HEK293 (cell line): ENCODE measurements at regions of chr5 and their contacts with region 1.

Region 1: DNA sequence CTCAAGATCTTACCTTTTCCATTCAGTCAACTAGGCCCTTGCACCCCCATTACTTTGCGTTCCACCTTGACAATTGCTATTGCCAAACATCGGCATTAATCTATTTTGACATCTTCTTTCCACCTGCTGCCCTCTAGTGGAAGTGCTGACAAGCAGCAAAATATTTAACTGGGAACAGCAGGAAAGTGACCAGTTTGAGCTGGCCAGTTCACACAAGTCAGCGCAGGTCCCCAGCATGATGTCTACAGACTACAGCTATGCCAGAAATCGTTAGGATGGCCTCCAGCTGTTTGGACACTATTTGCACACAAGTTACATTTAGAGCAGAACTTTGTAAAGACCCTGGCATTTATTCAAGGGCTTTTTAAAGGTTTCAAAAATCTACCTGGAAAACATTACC is 160.1 kb downstream of the GHR start:
- H3K4me3 ChIP-seq: no peak overlapping the region
- H3K27ac ChIP-seq: no peak overlapping the region
- H3K4me1 ChIP-seq: no peaks in the 10 kb centered on the region
- CTCF ChIP-seq: peak; percentile 40; the same call in 1 of the 2 replicates

Region 2: DNA sequence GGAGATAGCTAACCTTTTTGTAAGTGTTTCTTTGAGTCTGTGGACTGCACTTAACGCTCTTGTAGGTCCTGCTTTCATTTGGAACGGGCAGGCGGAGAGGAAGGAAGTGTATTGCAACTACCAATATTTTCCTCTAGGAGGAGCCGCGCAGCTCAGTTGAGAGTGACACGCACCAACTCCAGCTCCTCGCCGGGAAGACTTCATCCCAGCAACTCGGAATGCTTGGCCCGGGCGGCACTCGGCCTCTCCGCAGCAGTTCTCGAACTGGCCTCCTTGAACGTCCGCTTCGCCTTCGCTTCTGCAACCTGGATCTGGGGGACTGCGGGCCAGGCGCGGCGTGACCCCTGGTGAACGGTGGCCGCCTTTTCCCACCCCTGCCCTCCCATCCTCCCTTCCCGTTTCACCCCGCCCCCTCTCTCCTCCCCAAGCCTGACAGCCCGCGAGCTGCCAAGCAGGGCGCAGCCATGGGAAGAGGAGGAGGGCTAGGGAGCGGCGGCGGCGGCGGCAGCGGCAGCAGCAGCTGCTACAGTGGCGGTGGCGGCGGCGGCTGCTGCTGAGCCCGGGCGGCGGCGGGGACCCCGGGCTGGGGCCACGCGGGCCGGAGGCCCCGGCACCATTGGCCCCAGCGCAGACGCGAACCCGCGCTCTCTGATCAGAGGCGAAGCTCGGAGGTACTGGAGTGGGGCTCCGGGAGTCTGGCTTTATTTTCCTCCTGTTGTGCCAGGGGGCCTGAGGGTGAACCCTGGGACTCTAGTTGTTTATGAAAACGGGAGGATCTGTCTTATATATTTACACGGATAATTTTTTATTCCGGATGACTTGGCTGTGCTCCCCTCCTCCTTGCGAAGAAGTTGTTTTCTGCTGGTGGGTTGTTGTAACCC is 159.8 kb before region 1 on chr5 and contains the start of gene GHR:
- CTCF ChIA-PET with region 1: interaction called, 46 read pairs
- POLR2A ChIA-PET with region 1: no interaction called
- H3K4me3 ChIP-seq: peak within 1 kb of the TSS; percentile 61
- H3K27ac ChIP-seq: peak within 1 kb of the TSS; percentile 79; the same call in 1 of the 2 replicates
- H3K4me1 ChIP-seq: peaks cover 2% of the 10 kb centered on the region; the same call in 1 of the 2 replicates
- CTCF ChIP-seq: peak; percentile 85

Region 3: GRCh38 chr5:42595597-42595996 is 12.3 kb after region 1 on chr5:
- CTCF ChIA-PET with region 1: interaction called, 15 read pairs
- POLR2A ChIA-PET with region 1: no interaction called
- H3K4me3 ChIP-seq: no peak overlapping the region
- H3K27ac ChIP-seq: no peak overlapping the region
- H3K4me1 ChIP-seq: peaks cover 10% of the 10 kb centered on the region
- CTCF ChIP-seq: no peak

Region 4: DNA sequence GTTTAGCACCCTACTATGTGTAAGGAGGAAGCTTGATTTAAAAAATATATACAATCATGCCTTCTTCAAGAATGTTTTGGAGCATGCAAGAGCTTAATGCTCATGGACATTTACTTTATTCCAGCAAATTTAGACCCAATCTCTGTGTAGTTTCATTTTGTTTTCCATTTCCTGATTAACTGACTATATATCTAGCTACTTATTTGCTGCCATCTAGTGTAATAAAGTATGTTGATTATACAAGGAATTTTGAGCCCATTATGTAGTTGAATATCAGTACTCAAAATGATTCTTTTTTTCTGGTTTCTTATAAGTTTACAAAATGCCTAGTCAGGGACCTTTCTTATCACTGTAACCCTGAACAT is 73.3 kb after region 1 on chr5:
- CTCF ChIA-PET with region 1: no interaction called
- POLR2A ChIA-PET with region 1: no interaction called
- H3K4me3 ChIP-seq: no peak overlapping the region
- H3K27ac ChIP-seq: no peak overlapping the region
- H3K4me1 ChIP-seq: no peaks in the 10 kb centered on the region
- CTCF ChIP-seq: no peak

Region 5: DNA sequence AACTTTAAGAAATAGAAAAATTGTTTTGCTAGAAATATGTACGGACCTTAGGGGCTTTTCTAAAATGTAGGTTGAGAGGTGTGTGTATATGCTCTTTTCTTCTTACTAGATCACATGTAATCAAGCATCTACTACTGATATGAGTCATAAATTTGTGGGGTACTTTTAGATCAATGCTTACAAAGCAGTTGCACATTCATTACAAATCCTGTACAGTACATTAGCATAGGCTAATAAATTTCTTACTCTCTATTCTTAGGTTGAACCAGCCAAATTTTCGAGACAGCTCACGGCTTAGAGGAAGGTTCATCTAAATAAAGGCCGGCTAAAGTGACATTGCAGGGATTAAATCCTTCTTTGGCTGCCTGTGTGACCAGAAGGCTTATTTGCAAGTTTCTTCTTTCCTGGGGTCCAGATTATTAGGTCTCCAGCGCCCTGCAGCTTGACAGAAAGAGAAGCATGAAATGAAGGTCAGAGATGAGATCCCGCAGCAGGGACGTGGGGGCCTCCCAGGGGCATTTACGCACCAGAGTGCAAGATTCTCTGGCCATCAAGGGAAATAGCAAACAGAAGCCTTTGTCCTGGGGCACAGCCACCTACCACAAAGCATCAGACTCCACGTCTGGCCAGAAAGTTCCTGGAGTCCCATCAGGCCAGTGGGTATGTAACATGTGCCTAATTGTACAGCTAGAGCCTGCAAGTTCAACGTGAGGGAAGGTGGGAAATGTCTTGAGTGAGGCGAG is 661.7 kb after region 1 on chr5:
- CTCF ChIA-PET with region 1: no interaction called
- POLR2A ChIA-PET with region 1: no interaction called
- H3K4me3 ChIP-seq: no peak overlapping the region
- H3K27ac ChIP-seq: no peak overlapping the region
- H3K4me1 ChIP-seq: no peaks in the 10 kb centered on the region
- CTCF ChIP-seq: no peak